ENCODE measurements at regions of chr5 and their contacts with region 1.

Region 1: DNA sequence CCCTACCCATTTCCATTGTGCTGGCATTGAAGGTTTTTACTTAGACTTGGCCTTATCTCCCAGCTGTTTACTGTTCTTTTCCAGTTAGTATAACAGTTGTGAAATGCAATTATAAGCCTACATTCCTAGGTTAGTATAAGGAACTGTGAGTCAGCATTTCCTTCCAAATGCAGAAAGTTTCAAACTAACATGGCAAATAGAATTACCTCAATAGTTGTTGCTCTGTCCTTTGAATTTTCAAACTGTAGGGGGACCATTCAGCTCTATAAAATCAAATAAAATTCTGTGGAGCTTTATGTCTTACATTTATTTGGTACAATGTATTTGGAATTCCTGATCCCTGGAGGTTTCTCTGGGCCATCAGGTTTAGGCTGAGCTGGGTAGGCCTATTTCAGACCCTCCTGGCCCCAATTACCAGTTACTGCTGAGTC is 47.2 kb downstream of the ARHGEF28 start:
- DNase-seq: no peak
- ATAC-seq: no peak
- H3K4me3 ChIP-seq: no peak overlapping the region
- H3K27ac ChIP-seq: no peak overlapping the region
- H3K4me1 ChIP-seq: peaks cover 12% of the 10 kb centered on the region
- H3K27me3 ChIP-seq: no peaks in the 10 kb centered on the region
- CTCF ChIP-seq: no peak
- EP300 ChIP-seq: no peak
- POLR2A ChIP-seq: no peak
- RAD21 ChIP-seq: no peak

Region 2: GRCh38 chr5:73654171-73654811 is 18.9 kb before region 1 on chr5:
- CTCF ChIA-PET with region 1: interaction called, 7 read pairs
- POLR2A ChIA-PET with region 1: interaction called, 5 read pairs
- RAD21 ChIA-PET with region 1: interaction called, 7 read pairs
- SMC1A ChIA-PET with region 1: interaction called, 34 read pairs
- in situ Hi-C with region 1: no loop called
- intact Hi-C with region 1: no loop called
- DNase-seq: peak; percentile 65
- ATAC-seq: peak; percentile 88
- H3K4me3 ChIP-seq: no peak overlapping the region
- H3K27ac ChIP-seq: peak overlapping the region; percentile 59
- H3K4me1 ChIP-seq: peaks cover 23% of the 10 kb centered on the region
- H3K27me3 ChIP-seq: no peaks in the 10 kb centered on the region; a peak in 1 of 4 replicates
- CTCF ChIP-seq: no peak
- EP300 ChIP-seq: peak in 1 of 2 experiments; percentile 69; a peak in 1 of 4 replicates
- POLR2A ChIP-seq: no peak
- RAD21 ChIP-seq: no peak

Region 3: DNA sequence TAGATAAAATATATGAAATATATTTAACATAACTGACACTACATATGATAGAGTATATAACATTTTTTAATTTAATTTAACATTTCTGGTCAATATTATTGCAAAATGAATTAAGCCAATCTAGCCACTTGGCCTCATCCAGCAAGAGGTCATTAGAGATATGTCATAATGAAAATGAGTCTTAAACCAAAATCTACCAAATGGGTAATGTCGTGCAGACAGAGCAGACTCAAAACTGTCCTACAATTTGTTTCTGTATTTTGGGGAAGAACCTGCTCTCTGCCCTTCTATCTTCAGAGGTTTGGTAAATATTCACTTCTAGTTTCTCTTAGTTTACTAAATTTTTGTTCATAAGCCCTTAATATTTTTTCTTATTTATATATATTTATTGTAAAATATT is 14.2 kb after region 1 on chr5:
- CTCF ChIA-PET with region 1: interaction called, 22 read pairs
- POLR2A ChIA-PET with region 1: interaction called, 22 read pairs
- RAD21 ChIA-PET with region 1: interaction called, 37 read pairs
- SMC1A ChIA-PET with region 1: interaction called, 81 read pairs
- in situ Hi-C with region 1: no loop called
- intact Hi-C with region 1: loop called (anchors 2 kb)
- DNase-seq: no peak
- ATAC-seq: peak; percentile 81
- H3K4me3 ChIP-seq: no peak overlapping the region
- H3K27ac ChIP-seq: no peak overlapping the region
- H3K4me1 ChIP-seq: peaks cover under 1% of the 10 kb centered on the region; the same call in 1 of the 2 replicates
- H3K27me3 ChIP-seq: no peaks in the 10 kb centered on the region
- CTCF ChIP-seq: no peak
- EP300 ChIP-seq: peak; percentile 83
- POLR2A ChIP-seq: no peak
- RAD21 ChIP-seq: no peak

Measured in GM12878 (cell line).